ENCODE measurements at regions of chr11 and their contacts with region 1.

Region 1: GRCh38 chr11:64887757-64888405 is 9.5 kb upstream of the EHD1 start:
- DNase-seq: peak; percentile 97
- H3K4me3 ChIP-seq: peak overlapping the region in 1 of 2 experiments; percentile 35; a peak in 1 of 4 replicates
- H3K27ac ChIP-seq: peak overlapping the region in 1 of 2 experiments; percentile 31; a peak in 1 of 4 replicates
- H3K4me1 ChIP-seq: peaks cover 0 to 12% of the 10 kb centered on the region in 2 experiments; a peak in 1 of 4 replicates
- H3K27me3 ChIP-seq: no peaks in the 10 kb centered on the region
- CTCF ChIP-seq: peak; percentile 91
- EP300 ChIP-seq: no peak
- RAD21 ChIP-seq: 0 out of 2 replicates have a peak, but pooled peaks have one; percentile 31

Region 2: GRCh38 chr11:64538501-64539294 is 349.2 kb before region 1 on chr11:
- CTCF ChIA-PET with region 1: no interaction called
- POLR2A ChIA-PET with region 1: no interaction called
- DNase-seq: no peak
- H3K4me3 ChIP-seq: no peak overlapping the region
- H3K27ac ChIP-seq: no peak overlapping the region
- H3K4me1 ChIP-seq: no peaks in the 10 kb centered on the region
- H3K27me3 ChIP-seq: no peaks in the 10 kb centered on the region; the same call in 1 of the 2 replicates
- CTCF ChIP-seq: no peak
- EP300 ChIP-seq: no peak
- RAD21 ChIP-seq: no peak

Region 3: DNA sequence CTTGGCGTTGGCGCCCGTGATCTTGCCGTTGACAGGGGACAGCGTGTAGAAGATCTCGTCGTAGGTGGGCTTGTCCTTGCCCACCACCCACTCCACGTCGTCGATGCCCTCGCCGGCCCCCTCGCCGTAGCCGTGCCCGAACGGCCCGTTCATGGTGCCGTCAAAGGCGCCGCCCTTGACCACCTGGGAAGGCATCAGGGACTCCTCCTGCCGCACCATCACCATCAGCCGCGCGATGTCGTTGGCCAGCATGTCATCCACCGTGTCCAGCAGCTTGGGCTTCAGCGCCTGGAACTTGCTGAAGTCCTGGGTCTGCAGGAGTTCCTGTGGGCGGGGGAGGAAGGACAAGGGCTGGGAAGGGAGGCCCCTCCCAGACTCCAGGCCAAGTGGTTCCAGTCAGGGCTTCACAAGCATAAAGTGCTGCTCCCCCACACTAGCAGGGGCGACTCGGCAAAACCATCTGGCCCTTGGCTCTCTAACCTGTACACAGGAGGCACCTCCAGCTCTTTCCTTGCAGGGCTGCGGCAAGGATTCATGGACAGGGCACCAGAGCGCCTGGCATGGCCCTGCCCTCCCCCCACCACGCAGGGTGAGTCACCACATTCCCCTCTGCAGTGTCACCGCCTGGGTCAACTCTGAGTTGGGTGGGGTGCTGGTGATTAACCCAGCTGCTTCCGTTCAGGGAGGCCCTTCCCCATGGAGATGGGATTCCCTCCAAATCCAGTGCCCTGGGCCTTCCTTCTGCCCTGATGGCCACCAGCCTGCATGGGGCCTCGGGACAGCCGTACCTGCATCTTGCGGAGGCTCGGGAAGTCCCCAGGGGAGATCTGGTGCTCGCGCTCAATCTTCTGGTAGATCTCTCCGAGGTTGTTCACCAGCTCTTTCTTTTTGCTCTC is 33.1 kb before region 1 on chr11:
- CTCF ChIA-PET with region 1: interaction called, 530 read pairs
- POLR2A ChIA-PET with region 1: interaction called, 3 read pairs
- DNase-seq: no peak
- H3K4me3 ChIP-seq: no peak overlapping the region
- H3K27ac ChIP-seq: peak overlapping the region; percentile 19 to 80; a peak in 3 of 4 replicates
- H3K4me1 ChIP-seq: peaks cover 11 to 28% of the 10 kb centered on the region in 2 experiments; a peak in 3 of 4 replicates
- H3K27me3 ChIP-seq: no peaks in the 10 kb centered on the region
- CTCF ChIP-seq: no peak
- EP300 ChIP-seq: peak in 1 of 2 experiments; percentile 96; a peak in 2 of 4 replicates
- RAD21 ChIP-seq: no peak